Activated T-helper 1 cell treated with anti-CD3 and anti-CD28 coated beads, Interleukin-12 subunit alpha, Interleukin-12 subunit beta, Interleukin-2, Interleukin-4 antibody, amounts not matched to agents 30 ng/mL and 10 ng/mL and 1 ng/mL, durations not matched to agents 14 hours and 24 hours and 36 hours (primary cell): ENCODE measurements at regions of chr20 and their contacts with region 1.

Region 1: GRCh38 chr20:32789896-32790750 is 27.9 kb downstream of the DNMT3B start:
- DNase-seq: peak; percentile 60
- H3K4me3 Mint-ChIP-seq: no peak overlapping the region
- H3K27ac Mint-ChIP-seq: no peak overlapping the region
- H3K4me1 Mint-ChIP-seq: peaks cover 29% of the 10 kb centered on the region
- H3K27me3 Mint-ChIP-seq: no peaks in the 10 kb centered on the region

Region 2: DNA sequence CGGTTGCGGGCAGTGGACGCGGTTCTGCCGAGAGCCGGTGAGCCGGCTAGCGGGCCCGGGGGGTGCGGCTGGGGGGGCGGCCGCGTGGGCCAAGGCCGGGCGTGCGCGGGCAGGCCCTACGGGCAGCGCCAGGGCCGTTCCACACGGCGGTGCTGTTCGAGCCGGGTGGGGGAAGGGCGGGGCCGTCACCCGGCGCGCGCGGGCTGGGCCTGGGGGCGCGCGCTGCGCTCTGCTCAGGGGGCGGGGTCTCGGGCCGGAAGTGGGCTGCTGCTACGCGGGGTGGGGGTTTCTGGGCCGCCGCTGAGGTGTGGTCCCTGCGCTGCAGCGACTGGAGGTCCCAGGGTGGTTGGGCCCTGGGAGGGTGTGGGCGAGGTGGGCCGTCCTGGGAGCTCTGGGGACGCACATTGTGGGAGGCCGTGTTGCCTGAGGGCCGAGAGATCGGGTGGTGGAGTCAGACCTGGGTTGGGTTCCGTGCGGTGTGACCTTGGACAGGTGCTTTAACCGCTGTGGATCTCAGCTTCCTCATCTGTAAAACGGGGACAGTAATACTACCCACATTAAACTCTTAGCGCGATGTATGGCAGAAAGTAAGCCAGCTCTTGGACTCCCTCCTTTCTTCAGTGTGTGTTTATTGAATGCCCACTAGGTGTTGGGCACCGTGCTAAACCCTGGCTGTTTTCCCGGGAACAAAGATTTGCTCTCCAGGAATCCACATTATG is 30.0 kb after region 1 on chr20:
- intact Hi-C with region 1: loop called (anchors 1 kb)
- DNase-seq: no peak
- H3K4me3 Mint-ChIP-seq: peak overlapping the region; percentile 96
- H3K27ac Mint-ChIP-seq: peak overlapping the region; percentile 94
- H3K4me1 Mint-ChIP-seq: peaks cover 39% of the 10 kb centered on the region
- H3K27me3 Mint-ChIP-seq: no peaks in the 10 kb centered on the region

Region 3: GRCh38 chr20:32894026-32894483 is 103.9 kb after region 1 on chr20:
- intact Hi-C with region 1: loop called (anchors 1 kb)
- DNase-seq: no peak
- H3K4me3 Mint-ChIP-seq: no peak overlapping the region
- H3K27ac Mint-ChIP-seq: no peak overlapping the region
- H3K4me1 Mint-ChIP-seq: no peaks in the 10 kb centered on the region
- H3K27me3 Mint-ChIP-seq: no peaks in the 10 kb centered on the region

Region 4: DNA sequence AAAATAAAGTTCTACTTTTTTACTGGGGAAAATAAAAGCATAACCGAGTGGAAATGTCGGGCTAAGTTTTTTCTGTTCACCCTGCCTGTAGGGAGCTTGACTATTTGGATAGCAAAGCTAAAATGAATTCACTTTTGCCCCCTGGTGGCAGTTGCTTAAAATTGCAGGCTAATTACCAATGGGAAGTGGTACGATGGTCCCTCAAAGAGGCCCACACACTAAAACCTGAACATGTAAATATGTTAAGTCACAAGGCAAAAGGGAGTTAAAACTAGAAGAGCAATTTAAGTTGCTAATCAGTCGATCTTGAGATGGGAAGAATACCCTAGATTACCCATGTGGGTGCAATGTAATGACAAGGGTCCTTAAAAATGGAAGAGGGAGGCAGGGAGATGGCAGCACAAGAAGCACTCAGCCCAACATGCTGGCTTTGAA is 215.0 kb after region 1 on chr20:
- intact Hi-C with region 1: loop called (anchors 1 kb)
- DNase-seq: peak; percentile 5
- H3K4me3 Mint-ChIP-seq: no peak overlapping the region
- H3K27ac Mint-ChIP-seq: no peak overlapping the region
- H3K4me1 Mint-ChIP-seq: no peaks in the 10 kb centered on the region
- H3K27me3 Mint-ChIP-seq: no peaks in the 10 kb centered on the region

Region 5: GRCh38 chr20:33299111-33299603 is 509.0 kb after region 1 on chr20:
- intact Hi-C with region 1: loop called (anchors 2 kb)
- DNase-seq: peak; percentile 48
- H3K4me3 Mint-ChIP-seq: no peak overlapping the region
- H3K27ac Mint-ChIP-seq: no peak overlapping the region
- H3K4me1 Mint-ChIP-seq: peaks cover 3% of the 10 kb centered on the region
- H3K27me3 Mint-ChIP-seq: peaks cover 9% of the 10 kb centered on the region